ENCODE measurements at regions of chr6 and their contacts with region 1.

Region 1: DNA sequence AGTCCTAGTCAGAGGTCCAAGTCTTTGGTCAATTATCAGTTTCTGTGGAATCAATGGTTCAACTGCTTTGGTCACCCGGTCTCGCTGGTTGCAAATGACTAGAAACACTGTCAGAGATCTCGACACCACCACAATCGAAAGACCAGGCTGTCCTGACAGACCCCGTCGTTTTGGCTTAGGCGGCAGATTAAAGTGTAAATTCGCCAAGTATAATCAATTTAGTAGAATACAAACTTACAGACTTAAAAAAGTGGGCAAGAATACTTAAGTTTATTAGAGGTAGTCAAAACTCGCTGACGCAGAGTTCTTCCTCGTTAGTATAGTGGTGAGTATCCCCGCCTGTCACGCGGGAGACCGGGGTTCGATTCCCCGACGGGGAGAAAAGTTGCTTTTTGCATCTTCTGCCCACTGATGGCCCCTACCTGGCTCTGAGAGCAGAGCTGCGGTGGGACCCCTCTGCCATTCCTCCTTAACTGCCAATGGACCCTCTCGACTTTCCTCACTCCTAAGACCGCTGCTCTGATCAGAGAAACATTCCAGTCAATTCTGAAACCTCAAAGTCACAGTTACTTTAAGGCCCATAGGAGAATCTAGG is 30.6 kb upstream of the ZNF184 start:
- DNase-seq: peak; percentile 61
- H3K4me3 ChIP-seq: peak overlapping the region; percentile 48 to 64 (median 60)
- H3K27ac ChIP-seq: peak overlapping the region; percentile 71
- H3K4me1 ChIP-seq: no peaks in the 10 kb centered on the region
- H3K27me3 ChIP-seq: no peaks in the 10 kb centered on the region
- CTCF ChIP-seq: no peak

Region 2: GRCh38 chr6:27295301-27296081 is 208.0 kb before region 1 on chr6:
- CTCF ChIA-PET with region 1: no interaction called
- dilution Hi-C with region 1: no loop called
- in situ Hi-C with region 1: no loop called
- intact Hi-C with region 1: loop called (anchors 10 kb)
- DNase-seq: peak; percentile 82
- H3K4me3 ChIP-seq: peak overlapping the region; percentile 54 to 77 (median 63)
- H3K27ac ChIP-seq: no peak overlapping the region
- H3K4me1 ChIP-seq: peaks cover 4% of the 10 kb centered on the region
- H3K27me3 ChIP-seq: no peaks in the 10 kb centered on the region
- CTCF ChIP-seq: no peak

Region 3: GRCh38 chr6:27332692-27333641 is 170.6 kb before region 1 on chr6:
- CTCF ChIA-PET with region 1: no interaction called
- dilution Hi-C with region 1: no loop called
- in situ Hi-C with region 1: no loop called
- intact Hi-C with region 1: loop called (anchors 5 kb)
- DNase-seq: peak; percentile 76
- H3K4me3 ChIP-seq: peak overlapping the region; percentile 45 to 76 (median 72)
- H3K27ac ChIP-seq: no peak overlapping the region
- H3K4me1 ChIP-seq: peaks cover 3% of the 10 kb centered on the region
- H3K27me3 ChIP-seq: no peaks in the 10 kb centered on the region
- CTCF ChIP-seq: no peak

Region 4: DNA sequence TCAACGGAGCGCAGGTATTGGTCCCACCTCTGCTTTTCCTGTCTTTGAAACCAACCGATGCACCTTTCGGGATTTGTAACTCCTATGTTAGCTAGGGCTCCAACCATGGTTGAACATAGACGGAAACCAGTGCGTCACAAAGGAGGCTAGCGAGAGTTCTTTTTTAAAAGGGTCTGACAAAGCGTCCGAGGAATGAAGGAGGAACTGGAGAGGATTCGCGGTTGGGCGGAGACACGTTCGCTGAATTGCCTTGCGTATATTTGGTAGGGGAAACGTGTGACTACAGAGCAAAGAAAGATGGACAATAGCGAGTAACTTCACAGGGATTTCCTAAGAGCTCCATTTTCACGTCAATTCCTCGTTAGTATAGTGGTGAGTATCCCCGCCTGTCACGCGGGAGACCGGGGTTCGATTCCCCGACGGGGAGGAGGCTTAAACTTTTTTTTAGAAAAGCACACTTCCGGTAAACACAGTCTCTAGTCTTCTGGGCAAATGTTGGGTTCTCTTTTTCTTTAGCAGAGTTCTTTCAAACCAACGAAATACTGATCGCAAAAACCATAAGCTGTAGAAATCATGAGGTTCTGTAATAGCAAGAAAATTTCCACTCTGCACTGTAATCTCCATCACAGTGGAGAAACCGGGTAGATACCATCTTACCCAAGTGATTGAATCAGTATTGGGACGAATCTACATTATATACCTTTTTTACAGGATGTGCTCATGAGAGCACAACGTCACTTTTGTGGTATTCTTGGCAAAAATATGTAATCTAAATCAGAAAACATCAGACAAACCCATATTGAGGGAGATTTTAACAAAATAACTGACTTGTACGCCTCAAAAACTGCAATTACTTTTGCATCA is 24.0 kb before region 1 on chr6:
- CTCF ChIA-PET with region 1: no interaction called
- dilution Hi-C with region 1: no loop called
- in situ Hi-C with region 1: no loop called
- intact Hi-C with region 1: loop called (anchors 1 kb)
- DNase-seq: peak; percentile 89
- H3K4me3 ChIP-seq: peak overlapping the region; percentile 62 to 79 (median 76)
- H3K27ac ChIP-seq: peak overlapping the region; percentile 90
- H3K4me1 ChIP-seq: peaks cover 5% of the 10 kb centered on the region
- H3K27me3 ChIP-seq: no peaks in the 10 kb centered on the region
- CTCF ChIP-seq: no peak

Region 5: GRCh38 chr6:27545271-27546046 is 41.9 kb after region 1 on chr6:
- CTCF ChIA-PET with region 1: no interaction called
- dilution Hi-C with region 1: no loop called
- in situ Hi-C with region 1: no loop called
- intact Hi-C with region 1: loop called (anchors 1 kb)
- DNase-seq: peak; percentile 93
- H3K4me3 ChIP-seq: peak overlapping the region; percentile 51 to 60 (median 56)
- H3K27ac ChIP-seq: peak overlapping the region; percentile 61
- H3K4me1 ChIP-seq: peaks cover 6% of the 10 kb centered on the region
- H3K27me3 ChIP-seq: no peaks in the 10 kb centered on the region
- CTCF ChIP-seq: no peak

Region 6: DNA sequence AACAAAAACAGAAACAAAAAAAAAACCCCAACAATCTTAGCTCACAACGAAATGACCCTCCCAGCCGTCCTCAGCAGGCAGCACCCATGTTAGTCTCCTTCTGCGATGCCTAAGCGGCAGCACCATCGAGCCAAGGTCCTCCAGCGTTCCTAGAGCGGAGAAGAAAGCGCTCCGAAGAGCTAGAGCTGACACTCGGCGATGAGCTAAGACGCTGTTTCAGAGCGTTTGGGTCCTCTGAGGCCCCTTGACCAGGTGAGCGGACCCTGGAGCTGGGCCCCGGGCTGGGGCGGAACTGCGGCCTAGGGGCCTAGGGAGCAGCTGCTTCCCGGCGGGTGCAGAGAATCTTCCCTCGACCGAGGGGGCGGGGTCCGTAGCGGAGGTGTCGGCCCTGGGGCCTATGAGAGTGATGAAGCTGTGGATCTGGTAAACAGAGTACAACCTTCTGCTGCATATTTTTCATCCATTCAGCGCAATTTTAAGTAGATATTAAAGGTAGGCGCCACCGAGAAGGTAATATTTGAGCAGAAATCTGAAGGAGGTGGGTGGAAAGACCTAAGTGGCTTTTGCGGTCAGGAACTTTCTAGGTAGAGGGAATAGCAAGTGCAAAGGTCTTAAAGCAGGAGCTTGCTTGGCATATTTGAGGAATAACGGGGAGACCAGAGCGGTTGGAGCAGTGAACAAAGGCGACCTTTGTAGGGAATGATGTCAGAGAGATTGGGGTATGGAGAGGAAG is 763.6 kb after region 1 on chr6 and contains the start of gene ZSCAN26:
- CTCF ChIA-PET with region 1: no interaction called
- dilution Hi-C with region 1: no loop called
- in situ Hi-C with region 1: no loop called
- intact Hi-C with region 1: no loop called
- DNase-seq: peak; percentile 91
- H3K4me3 ChIP-seq: peak within 1 kb of the TSS; percentile 85 to 94 (median 91)
- H3K27ac ChIP-seq: peak within 1 kb of the TSS; percentile 70
- H3K4me1 ChIP-seq: peaks cover 22% of the 10 kb centered on the region
- H3K27me3 ChIP-seq: no peaks in the 10 kb centered on the region
- CTCF ChIP-seq: no peak
- total RNA-seq, gene ZSCAN26: 12.4 to 12.7 TPM

Measured in mammary epithelial cell (primary cell).